Pancreas (tissue), 10 donors: ENCODE measurements at regions of chrX and their contacts with region 1.

Region 1: DNA sequence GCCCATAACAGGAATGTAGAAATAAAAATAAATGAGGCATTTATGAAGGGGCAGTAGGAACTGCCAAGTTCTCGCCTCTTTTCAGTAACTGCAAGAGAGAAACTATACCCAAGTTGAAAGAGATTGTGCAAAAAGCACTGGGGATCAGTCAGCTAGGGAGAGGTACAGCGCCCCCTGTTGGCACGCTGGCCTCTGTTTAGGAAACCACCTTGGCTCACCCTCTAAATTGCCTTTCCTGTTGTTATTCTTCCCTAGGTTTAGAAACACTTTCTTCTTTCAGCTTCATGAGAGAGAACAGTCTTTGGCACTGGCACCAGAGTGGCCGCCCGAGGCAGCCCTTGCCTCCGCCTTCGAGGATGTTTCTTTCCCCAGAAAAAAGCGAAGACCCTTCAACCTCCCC is 348.5 kb downstream of the MID1IP1 start:
- DNase-seq: peak; percentile 48 to 92 (median 77)
- ATAC-seq: peak; percentile 76 to 93 (median 90)
- H3K4me3 ChIP-seq: no peak overlapping the region
- H3K27ac ChIP-seq: no peak overlapping the region
- H3K4me1 ChIP-seq: peaks cover 0 to 7% (median 0%) of the 10 kb centered on the region in 3 donors
- H3K27me3 ChIP-seq: peaks cover 0 to 7% (median 0%) of the 10 kb centered on the region in 4 donors
- CTCF ChIP-seq: peak; percentile 45 to 77 (median 72)

Region 2: GRCh38 chrX:38768079-38768478 is 381.7 kb before region 1 on chrX:
- intact Hi-C with region 1: loop called in 2 of 3 experiments (anchors 10 kb)
- DNase-seq: no peak
- ATAC-seq: peak in 3 of 4 donors; percentile 63 to 80 (median 73)
- H3K4me3 ChIP-seq: no peak overlapping the region
- H3K27ac ChIP-seq: no peak overlapping the region
- H3K4me1 ChIP-seq: no peaks in the 10 kb centered on the region
- H3K27me3 ChIP-seq: peaks cover 0 to 10% (median 0%) of the 10 kb centered on the region in 4 donors
- CTCF ChIP-seq: no peak

Region 3: GRCh38 chrX:38774249-38774648 is 375.5 kb before region 1 on chrX:
- intact Hi-C with region 1: loop called in 2 of 3 experiments (anchors 10 kb)
- DNase-seq: no peak
- ATAC-seq: no peak
- H3K4me3 ChIP-seq: no peak overlapping the region
- H3K27ac ChIP-seq: no peak overlapping the region
- H3K4me1 ChIP-seq: no peaks in the 10 kb centered on the region
- H3K27me3 ChIP-seq: peaks cover 0 to 9% (median 0%) of the 10 kb centered on the region in 4 donors
- CTCF ChIP-seq: no peak